GM12878 (cell line): ENCODE measurements at regions of chr17 and their contacts with region 1.

Region 1: GRCh38 chr17:57995076-57995956 is 7.3 kb upstream of the VEZF1 start:
- DNase-seq: no peak
- ATAC-seq: peak; percentile 87
- H3K4me3 ChIP-seq: no peak overlapping the region
- H3K27ac ChIP-seq: no peak overlapping the region
- H3K4me1 ChIP-seq: peaks cover 22% of the 10 kb centered on the region
- H3K27me3 ChIP-seq: no peaks in the 10 kb centered on the region
- CTCF ChIP-seq: peak; percentile 69 to 81 (median 75)
- EP300 ChIP-seq: no peak
- POLR2A ChIP-seq: peak; percentile 81
- RAD21 ChIP-seq: peak; percentile 83

Region 2: GRCh38 chr17:57849874-57850754 is 145.2 kb before region 1 on chr17 and contains the start of gene MRPS23:
- CTCF ChIA-PET with region 1: interaction called, 708 read pairs
- POLR2A ChIA-PET with region 1: interaction called, 7 read pairs
- RAD21 ChIA-PET with region 1: interaction called, 239 read pairs
- SMC1A ChIA-PET with region 1: interaction called, 341 read pairs
- in situ Hi-C with region 1: loop called (anchors 5 kb)
- intact Hi-C with region 1: no loop called
- DNase-seq: peak; percentile 92
- ATAC-seq: peak; percentile 97
- H3K4me3 ChIP-seq: peak within 1 kb of the TSS; percentile 96
- H3K27ac ChIP-seq: peak within 1 kb of the TSS; percentile 74
- H3K4me1 ChIP-seq: peaks cover 8% of the 10 kb centered on the region
- H3K27me3 ChIP-seq: no peaks in the 10 kb centered on the region
- CTCF ChIP-seq: no peak
- EP300 ChIP-seq: peak; percentile 6 to 46; a peak in 1 of 4 replicates
- POLR2A ChIP-seq: peak; percentile 95
- RAD21 ChIP-seq: no peak
- polyA plus RNA-seq, gene MRPS23: 186 to 237 TPM

Region 3: GRCh38 chr17:57875309-57876115 is 119.8 kb before region 1 on chr17:
- CTCF ChIA-PET with region 1: interaction called, 50 read pairs
- POLR2A ChIA-PET with region 1: no interaction called
- RAD21 ChIA-PET with region 1: interaction called, 4 read pairs
- SMC1A ChIA-PET with region 1: interaction called, 5 read pairs
- in situ Hi-C with region 1: no loop called
- intact Hi-C with region 1: no loop called
- DNase-seq: no peak
- ATAC-seq: no peak
- H3K4me3 ChIP-seq: no peak overlapping the region
- H3K27ac ChIP-seq: no peak overlapping the region
- H3K4me1 ChIP-seq: peaks cover 8% of the 10 kb centered on the region
- H3K27me3 ChIP-seq: peaks cover 0 to 1% of the 10 kb centered on the region in 2 experiments; a peak in 2 of 4 replicates
- CTCF ChIP-seq: no peak
- EP300 ChIP-seq: no peak
- POLR2A ChIP-seq: no peak
- RAD21 ChIP-seq: 0 out of 2 replicates have a peak, but pooled peaks have one; percentile 5

Region 4: GRCh38 chr17:57916925-57917858 is 78.1 kb before region 1 on chr17:
- CTCF ChIA-PET with region 1: interaction called, 25 read pairs
- POLR2A ChIA-PET with region 1: no interaction called
- RAD21 ChIA-PET with region 1: interaction called, 3 read pairs
- SMC1A ChIA-PET with region 1: interaction called, 7 read pairs
- in situ Hi-C with region 1: no loop called
- intact Hi-C with region 1: no loop called
- DNase-seq: no peak
- ATAC-seq: peak; percentile 88
- H3K4me3 ChIP-seq: no peak overlapping the region
- H3K27ac ChIP-seq: no peak overlapping the region
- H3K4me1 ChIP-seq: no peaks in the 10 kb centered on the region
- H3K27me3 ChIP-seq: no peaks in the 10 kb centered on the region
- CTCF ChIP-seq: peak; percentile 17 to 33 (median 29); a peak in 4 of 6 replicates
- EP300 ChIP-seq: no peak
- POLR2A ChIP-seq: no peak
- RAD21 ChIP-seq: peak; percentile 48; the same call in 1 of the 2 replicates

Region 5: GRCh38 chr17:57955183-57955931 is 40.0 kb before region 1 on chr17 and contains the start of gene CUEDC1:
- CTCF ChIA-PET with region 1: interaction called, 55 read pairs
- POLR2A ChIA-PET with region 1: interaction called, 4 read pairs
- RAD21 ChIA-PET with region 1: interaction called, 10 read pairs
- SMC1A ChIA-PET with region 1: interaction called, 19 read pairs
- in situ Hi-C with region 1: no loop called
- intact Hi-C with region 1: no loop called
- DNase-seq: no peak
- ATAC-seq: peak; percentile 79
- H3K4me3 ChIP-seq: peak within 1 kb of the TSS; percentile 74
- H3K27ac ChIP-seq: no peak within 1 kb of the TSS
- H3K4me1 ChIP-seq: peaks cover 23% of the 10 kb centered on the region
- H3K27me3 ChIP-seq: peaks cover 0 to 2% of the 10 kb centered on the region in 2 experiments; a peak in 2 of 4 replicates
- CTCF ChIP-seq: peak in 2 of 3 experiments; percentile 27 to 29; a peak in 2 of 6 replicates
- EP300 ChIP-seq: no peak
- POLR2A ChIP-seq: no peak
- RAD21 ChIP-seq: no peak
- polyA plus RNA-seq, gene CUEDC1: 0.24 to 0.80 TPM

Region 6: GRCh38 chr17:58006924-58007780 is 11.8 kb after region 1 on chr17 and contains the start of gene SRSF1:
- CTCF ChIA-PET with region 1: interaction called, 12 read pairs
- POLR2A ChIA-PET with region 1: interaction called, 10 read pairs
- RAD21 ChIA-PET with region 1: interaction called, 25 read pairs
- SMC1A ChIA-PET with region 1: interaction called, 39 read pairs
- in situ Hi-C with region 1: no loop called
- intact Hi-C with region 1: no loop called
- DNase-seq: peak; percentile 97
- ATAC-seq: peak; percentile 91
- H3K4me3 ChIP-seq: peak within 1 kb of the TSS; percentile 98
- H3K27ac ChIP-seq: peak within 1 kb of the TSS; percentile 96
- H3K4me1 ChIP-seq: peaks cover 8% of the 10 kb centered on the region; the same call in 1 of the 2 replicates
- H3K27me3 ChIP-seq: no peaks in the 10 kb centered on the region
- CTCF ChIP-seq: no peak
- EP300 ChIP-seq: peak in 1 of 2 experiments; percentile 62; a peak in 2 of 4 replicates
- POLR2A ChIP-seq: peak; percentile 99
- RAD21 ChIP-seq: no peak
- polyA plus RNA-seq, gene SRSF1: 101 to 104 TPM

Region 7: DNA sequence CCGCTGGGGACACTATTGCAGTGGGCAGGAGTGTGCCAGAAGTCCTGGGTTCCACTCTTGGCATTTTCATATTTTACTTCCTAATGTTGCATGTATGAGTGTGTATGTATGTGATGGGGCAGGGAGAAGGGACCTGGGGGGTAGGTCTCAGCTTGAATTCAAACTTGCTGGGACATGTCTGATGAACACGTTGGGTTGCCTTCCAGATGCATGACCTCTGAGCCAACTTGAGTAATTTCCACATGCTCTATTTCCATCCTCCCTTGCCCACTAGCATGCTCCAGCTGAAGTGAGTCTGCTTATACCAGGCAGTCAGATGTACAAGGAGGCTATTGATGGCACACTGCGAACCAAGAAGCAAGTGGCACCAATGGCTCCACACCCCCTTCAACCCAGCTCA is 44.7 kb after region 1 on chr17:
- CTCF ChIA-PET with region 1: no interaction called
- POLR2A ChIA-PET with region 1: no interaction called
- RAD21 ChIA-PET with region 1: no interaction called
- SMC1A ChIA-PET with region 1: no interaction called
- in situ Hi-C with region 1: no loop called
- intact Hi-C with region 1: no loop called
- DNase-seq: no peak
- ATAC-seq: no peak
- H3K4me3 ChIP-seq: no peak overlapping the region
- H3K27ac ChIP-seq: no peak overlapping the region
- H3K4me1 ChIP-seq: no peaks in the 10 kb centered on the region
- H3K27me3 ChIP-seq: 0 out of 4 replicates have a peak, but pooled peaks cover 0 to 2% of the 10 kb centered on the region in 2 experiments
- CTCF ChIP-seq: no peak
- EP300 ChIP-seq: no peak
- POLR2A ChIP-seq: no peak
- RAD21 ChIP-seq: no peak

Region 8: DNA sequence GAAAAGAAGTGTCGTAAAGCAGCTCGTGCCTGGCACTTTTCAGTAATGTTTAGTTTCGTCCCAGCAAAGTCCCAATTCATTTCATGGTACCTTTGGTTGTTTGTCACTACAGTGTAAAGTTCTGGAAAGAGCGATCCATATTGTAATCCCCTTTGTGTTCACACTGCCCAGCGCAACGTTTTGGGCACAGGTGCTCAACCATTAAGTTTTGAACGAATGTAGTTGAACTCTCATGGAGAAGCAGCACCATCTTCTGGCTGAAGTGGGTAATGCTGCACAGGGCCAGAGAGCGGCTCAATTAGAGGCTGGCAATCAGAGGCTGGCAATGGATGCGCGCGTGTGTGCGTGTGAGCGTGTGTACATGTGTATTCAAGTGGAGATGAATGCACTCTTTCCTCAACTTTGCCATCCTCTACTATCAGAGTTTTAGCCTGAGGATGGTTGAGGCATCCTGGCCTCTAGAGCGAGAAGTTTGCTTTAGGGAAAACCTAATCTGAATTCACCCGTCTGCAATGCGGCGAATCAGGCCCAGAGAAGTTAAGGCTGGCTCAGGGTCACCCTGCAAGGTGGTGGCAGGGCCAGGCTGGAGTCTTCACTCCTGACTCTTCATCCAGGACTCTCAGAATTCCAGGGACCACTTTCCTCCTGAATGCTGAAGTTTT is 117.8 kb after region 1 on chr17:
- CTCF ChIA-PET with region 1: interaction called, 63 read pairs
- POLR2A ChIA-PET with region 1: no interaction called
- RAD21 ChIA-PET with region 1: interaction called, 13 read pairs
- SMC1A ChIA-PET with region 1: interaction called, 14 read pairs
- in situ Hi-C with region 1: no loop called
- intact Hi-C with region 1: no loop called
- DNase-seq: peak; percentile 37
- ATAC-seq: peak; percentile 92
- H3K4me3 ChIP-seq: no peak overlapping the region
- H3K27ac ChIP-seq: no peak overlapping the region
- H3K4me1 ChIP-seq: no peaks in the 10 kb centered on the region
- H3K27me3 ChIP-seq: peaks cover 0 to 3% of the 10 kb centered on the region in 2 experiments; a peak in 1 of 4 replicates
- CTCF ChIP-seq: peak; percentile 93 to 99 (median 98); a peak in 5 of 6 replicates
- EP300 ChIP-seq: no peak
- POLR2A ChIP-seq: no peak
- RAD21 ChIP-seq: peak; percentile 96